GM18951 (cell line): ENCODE measurements at regions of chr10 and their contacts with region 1.

Region 1: GRCh38 chr10:117318909-117319308 is 56.3 kb downstream of the PDZD8 start:
- POLR2A ChIP-seq: no peak

Region 2: DNA sequence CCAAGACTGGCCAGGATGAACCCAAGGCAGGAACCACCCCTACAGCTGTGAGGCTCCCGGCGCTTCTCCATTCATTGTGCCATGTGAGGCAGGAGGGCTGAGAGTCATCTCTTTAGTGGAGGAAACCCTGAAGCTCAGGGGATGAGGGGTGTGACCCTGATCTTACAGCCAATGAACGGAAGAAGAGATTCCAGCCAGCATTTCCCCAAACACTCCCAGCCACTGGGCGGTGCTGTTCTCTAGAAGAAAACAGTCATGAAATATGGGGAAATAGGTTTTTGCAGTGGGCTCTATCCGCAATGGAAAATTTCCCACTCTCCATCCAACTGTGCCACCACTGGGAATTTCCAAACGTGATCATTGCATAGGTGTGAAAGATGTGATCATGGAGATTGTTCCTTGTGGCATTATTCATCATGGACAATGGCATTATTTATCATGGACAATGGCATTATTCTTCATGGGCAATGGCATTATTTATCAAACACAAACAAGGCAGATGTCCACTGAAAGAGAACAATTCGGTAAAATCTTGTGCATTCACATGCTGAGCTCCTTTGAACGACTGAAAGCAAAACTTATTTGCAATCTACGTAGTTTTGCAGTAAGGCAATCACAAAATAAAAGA is 92.0 kb before region 1 on chr10:
- in situ Hi-C with region 1: loop called (anchors 10 kb)
- POLR2A ChIP-seq: no peak